ENCODE measurements at regions of chr1 and their contacts with region 1.

Region 1: GRCh38 chr1:17274186-17275170 is 25.6 kb downstream of the PADI3 start:
- DNase-seq: peak; percentile 59 to 94
- H3K4me3 ChIP-seq: no peak overlapping the region
- H3K27ac ChIP-seq: no peak overlapping the region
- H3K4me1 ChIP-seq: no peaks in the 10 kb centered on the region; a peak in 1 of 7 replicates
- H3K27me3 ChIP-seq: no peaks in the 10 kb centered on the region
- CTCF ChIP-seq: peak; percentile 84 to 93 (median 92)
- EP300 ChIP-seq: no peak
- POLR2A ChIP-seq: no peak
- RAD21 ChIP-seq: peak; percentile 79 to 83

Region 2: DNA sequence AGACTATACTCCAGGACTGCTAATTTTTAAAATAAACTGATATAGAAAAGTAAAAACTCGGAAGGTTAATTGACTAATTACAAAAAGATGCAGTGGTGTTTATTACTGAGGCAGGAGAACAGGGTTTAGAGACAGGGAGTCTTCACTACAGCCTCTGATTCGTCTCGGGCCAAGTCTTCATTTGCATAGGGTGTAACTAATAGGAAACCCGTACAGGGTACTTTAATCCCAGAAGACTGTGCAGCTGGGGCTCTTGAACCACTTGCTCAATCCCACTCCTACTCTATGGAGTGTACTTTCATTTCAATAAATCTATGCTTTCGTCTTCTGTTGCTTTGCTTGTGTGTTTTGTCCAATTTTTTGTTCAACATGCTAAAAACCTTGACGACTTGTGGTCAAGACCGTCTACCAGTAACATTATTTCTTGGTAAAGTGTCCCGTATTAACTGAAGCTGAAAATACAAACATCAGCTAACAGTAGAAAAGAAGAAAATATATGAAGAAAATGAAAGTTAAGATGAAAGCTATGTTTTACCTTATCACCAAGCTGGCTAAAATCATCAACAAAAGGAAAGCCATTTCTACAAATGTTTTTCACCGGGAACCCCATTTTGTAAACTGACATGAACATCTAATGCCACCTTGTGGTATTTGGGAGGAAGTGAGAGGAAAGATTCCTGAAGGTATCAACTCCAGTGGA is 228.7 kb before region 1 on chr1:
- CTCF ChIA-PET with region 1: no interaction called
- POLR2A ChIA-PET with region 1: no interaction called
- DNase-seq: no peak
- H3K4me3 ChIP-seq: no peak overlapping the region
- H3K27ac ChIP-seq: peak overlapping the region; percentile 3; the same call in 1 of the 2 replicates
- H3K4me1 ChIP-seq: no peaks in the 10 kb centered on the region
- H3K27me3 ChIP-seq: no peaks in the 10 kb centered on the region
- CTCF ChIP-seq: peak in 2 of 3 experiments; percentile 62 to 64; a peak in 3 of 4 replicates
- EP300 ChIP-seq: no peak
- POLR2A ChIP-seq: no peak
- RAD21 ChIP-seq: peak; percentile 78 to 81

Region 3: GRCh38 chr1:17109892-17110554 is 164.5 kb before region 1 on chr1:
- CTCF ChIA-PET with region 1: interaction called, 10 read pairs
- POLR2A ChIA-PET with region 1: no interaction called
- DNase-seq: no peak
- H3K4me3 ChIP-seq: no peak overlapping the region
- H3K27ac ChIP-seq: no peak overlapping the region
- H3K4me1 ChIP-seq: peaks cover 0 to 4% (median 0%) of the 10 kb centered on the region in 4 experiments; a peak in 1 of 7 replicates
- H3K27me3 ChIP-seq: no peaks in the 10 kb centered on the region
- CTCF ChIP-seq: no peak
- EP300 ChIP-seq: no peak
- POLR2A ChIP-seq: no peak
- RAD21 ChIP-seq: no peak

Region 4: DNA sequence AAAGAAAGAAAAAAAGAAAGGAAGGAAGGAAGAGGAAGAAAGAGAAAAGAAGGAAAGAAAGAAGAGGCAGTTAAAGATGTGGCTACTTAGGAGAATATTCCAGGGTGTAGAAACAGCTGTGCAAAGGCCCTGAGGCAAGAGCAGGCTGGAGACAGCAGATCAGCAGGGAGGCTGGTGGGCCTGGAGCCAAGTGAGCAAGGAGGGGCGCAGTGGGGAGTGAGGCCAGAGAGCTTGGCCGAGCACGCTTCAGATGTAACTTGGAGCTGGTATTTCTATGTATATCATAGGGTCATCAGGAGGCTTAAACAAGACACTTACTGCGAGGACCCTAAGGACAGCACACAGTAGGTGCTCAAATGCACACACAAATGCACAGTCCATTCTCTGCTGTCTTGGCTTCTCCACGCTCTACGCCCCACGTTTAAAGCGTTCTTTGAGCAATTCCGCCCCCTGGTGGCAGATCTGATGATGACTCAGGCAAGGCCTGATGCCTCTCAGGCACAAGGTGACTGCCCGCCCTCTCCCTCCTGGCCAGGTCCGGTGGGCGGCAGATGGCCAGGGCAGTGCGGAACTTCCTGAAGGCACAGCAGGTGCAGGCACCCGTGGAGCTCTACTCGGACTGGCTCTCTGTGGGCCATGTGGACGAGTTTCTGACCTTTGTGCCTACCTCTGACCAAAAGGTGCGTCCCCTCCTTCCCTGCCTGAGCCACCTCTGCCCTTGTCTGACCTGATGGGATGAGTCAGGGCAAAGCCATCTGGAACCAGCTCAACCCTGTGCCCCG is 37.5 kb before region 1 on chr1:
- CTCF ChIA-PET with region 1: interaction called, 11 read pairs
- POLR2A ChIA-PET with region 1: no interaction called
- DNase-seq: peak; percentile 79 to 98
- H3K4me3 ChIP-seq: no peak overlapping the region
- H3K27ac ChIP-seq: no peak overlapping the region
- H3K4me1 ChIP-seq: peaks cover 0 to 5% (median 0%) of the 10 kb centered on the region in 4 experiments; a peak in 4 of 7 replicates
- H3K27me3 ChIP-seq: no peaks in the 10 kb centered on the region; a peak in 1 of 7 replicates
- CTCF ChIP-seq: peak; percentile 88 to 97 (median 90)
- EP300 ChIP-seq: no peak
- POLR2A ChIP-seq: no peak
- RAD21 ChIP-seq: peak; percentile 97

Region 5: GRCh38 chr1:17250601-17251000 is 23.9 kb before region 1 on chr1:
- CTCF ChIA-PET with region 1: interaction called, 11 read pairs
- POLR2A ChIA-PET with region 1: no interaction called
- DNase-seq: no peak
- H3K4me3 ChIP-seq: no peak overlapping the region
- H3K27ac ChIP-seq: no peak overlapping the region
- H3K4me1 ChIP-seq: peaks cover 0 to 7% (median under 1%) of the 10 kb centered on the region in 4 experiments; a peak in 2 of 7 replicates
- H3K27me3 ChIP-seq: no peaks in the 10 kb centered on the region
- CTCF ChIP-seq: no peak
- EP300 ChIP-seq: no peak
- POLR2A ChIP-seq: no peak
- RAD21 ChIP-seq: no peak

Region 6: DNA sequence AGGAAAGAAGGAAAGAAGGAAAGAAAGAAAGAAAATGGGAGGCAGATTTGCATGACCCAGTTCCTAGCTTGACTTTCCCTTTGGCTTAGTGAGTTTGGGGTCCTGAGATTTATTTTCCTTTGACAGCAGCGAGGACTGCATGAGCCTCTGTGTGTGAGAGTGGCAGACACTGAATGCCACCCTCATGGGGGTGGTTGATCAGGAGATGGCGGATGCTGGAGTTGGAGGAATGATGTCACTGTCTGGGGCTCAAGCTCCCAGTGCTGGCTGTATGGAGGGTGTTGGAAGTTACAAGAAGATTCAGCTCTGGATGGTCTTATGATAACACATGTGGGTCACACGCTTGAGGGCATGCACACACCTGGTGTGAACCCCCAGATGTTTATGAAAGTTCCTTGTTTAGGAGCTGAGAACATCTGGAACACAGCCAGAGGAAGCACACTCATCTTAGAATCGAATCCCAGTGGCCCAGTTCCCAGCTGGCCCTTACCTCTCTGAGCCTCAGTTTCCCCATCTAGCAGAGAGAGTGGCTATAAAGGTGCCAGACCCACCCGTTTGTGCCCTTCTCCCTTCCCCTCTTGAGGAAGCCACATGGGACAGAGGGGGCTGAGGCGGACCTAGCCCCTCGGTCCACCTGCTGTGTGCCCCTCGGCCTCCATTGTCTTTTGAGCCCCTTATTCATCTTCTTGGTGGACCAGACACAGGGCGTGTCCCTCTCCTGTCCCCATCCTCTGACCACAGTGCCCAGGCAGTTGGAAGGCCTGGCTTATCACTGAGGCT is 39.2 kb after region 1 on chr1:
- CTCF ChIA-PET with region 1: interaction called, 10 read pairs
- POLR2A ChIA-PET with region 1: no interaction called
- DNase-seq: no peak
- H3K4me3 ChIP-seq: no peak overlapping the region
- H3K27ac ChIP-seq: no peak overlapping the region
- H3K4me1 ChIP-seq: peaks cover 6 to 31% (median 15%) of the 10 kb centered on the region in 4 experiments
- H3K27me3 ChIP-seq: no peaks in the 10 kb centered on the region
- CTCF ChIP-seq: no peak
- EP300 ChIP-seq: no peak
- POLR2A ChIP-seq: no peak
- RAD21 ChIP-seq: no peak